ENCODE measurements at regions of chr1 and their contacts with region 1.

Region 1: DNA sequence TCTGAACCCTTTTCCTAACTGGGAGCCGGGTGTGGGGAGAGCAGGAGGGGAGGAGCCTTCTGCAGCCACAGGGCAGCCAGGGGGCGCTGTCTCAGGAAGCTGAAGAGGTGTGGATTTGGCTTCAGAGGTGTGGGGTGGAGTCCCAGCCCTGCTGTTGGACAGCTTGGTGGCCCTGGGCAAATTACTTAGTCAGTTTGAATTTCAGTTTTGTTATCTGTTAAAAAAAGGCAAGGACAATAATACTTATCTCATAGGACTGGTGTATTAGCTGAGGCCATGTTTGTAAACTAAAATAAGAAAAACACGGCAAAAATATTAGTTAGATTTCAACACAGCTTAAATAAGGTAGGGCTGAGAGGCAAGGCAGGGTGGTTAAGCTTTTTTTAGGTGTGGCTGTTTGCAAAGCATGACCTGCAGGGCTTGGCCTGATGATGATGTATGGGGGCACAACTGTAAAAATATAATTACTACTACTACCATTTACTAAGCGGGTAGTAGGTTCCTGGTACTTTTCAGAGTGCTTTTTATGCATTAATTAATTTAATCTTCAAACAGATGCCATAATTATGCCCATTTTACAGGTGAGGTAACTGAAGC is 111.8 kb downstream of the PLXNA2 start:
- DNase-seq: peak; percentile 78
- H3K4me3 Mint-ChIP-seq: no peak overlapping the region
- H3K27ac Mint-ChIP-seq: no peak overlapping the region
- H3K4me1 Mint-ChIP-seq: peaks cover 8% of the 10 kb centered on the region
- H3K27me3 Mint-ChIP-seq: peaks cover 26% of the 10 kb centered on the region

Region 2: GRCh38 chr1:207336559-207337467 is 795.6 kb before region 1 on chr1:
- CTCF ChIA-PET with region 1: no interaction called
- intact Hi-C with region 1: no loop called
- DNase-seq: peak; percentile 43
- H3K4me3 Mint-ChIP-seq: no peak overlapping the region
- H3K27ac Mint-ChIP-seq: peak overlapping the region; percentile 82
- H3K4me1 Mint-ChIP-seq: peaks cover 68% of the 10 kb centered on the region
- H3K27me3 Mint-ChIP-seq: no peaks in the 10 kb centered on the region

Region 3: GRCh38 chr1:207998691-207999090 is 133.7 kb before region 1 on chr1:
- CTCF ChIA-PET with region 1: no interaction called
- intact Hi-C with region 1: no loop called
- DNase-seq: no peak
- H3K4me3 Mint-ChIP-seq: no peak overlapping the region
- H3K27ac Mint-ChIP-seq: no peak overlapping the region
- H3K4me1 Mint-ChIP-seq: no peaks in the 10 kb centered on the region
- H3K27me3 Mint-ChIP-seq: no peaks in the 10 kb centered on the region

Region 4: GRCh38 chr1:208149776-208150514 is 17.6 kb after region 1 on chr1:
- CTCF ChIA-PET with region 1: interaction called, 13 read pairs
- intact Hi-C with region 1: no loop called
- DNase-seq: no peak
- H3K4me3 Mint-ChIP-seq: no peak overlapping the region
- H3K27ac Mint-ChIP-seq: no peak overlapping the region
- H3K4me1 Mint-ChIP-seq: no peaks in the 10 kb centered on the region
- H3K27me3 Mint-ChIP-seq: no peaks in the 10 kb centered on the region

Region 5: DNA sequence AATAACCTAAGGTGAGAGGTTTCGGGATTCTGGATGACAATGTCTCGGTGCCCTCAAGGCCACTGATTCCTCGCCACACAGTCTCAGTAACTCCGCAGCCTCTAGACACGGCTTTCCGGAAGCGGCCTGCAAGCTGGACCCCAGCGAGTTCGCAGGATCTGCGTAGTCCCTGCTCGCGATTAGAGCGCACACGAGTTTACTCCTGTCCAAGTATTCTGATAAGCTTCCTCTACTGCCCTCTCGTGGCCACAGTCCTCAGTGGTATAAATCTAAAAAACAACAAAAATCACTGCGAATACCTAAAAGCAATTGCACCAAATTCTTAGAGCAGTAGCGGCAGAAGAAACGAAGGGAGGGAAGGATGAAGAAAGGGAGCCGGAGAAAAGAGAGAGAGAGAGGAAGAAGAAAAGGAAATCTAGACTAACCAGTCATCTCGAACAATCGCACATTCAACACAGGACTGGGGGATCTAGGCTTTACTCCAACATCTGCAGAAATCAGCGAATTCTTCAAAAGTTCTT is 112.9 kb after region 1 on chr1:
- CTCF ChIA-PET with region 1: interaction called, 39 read pairs
- intact Hi-C with region 1: loop called (anchors 1 kb)
- DNase-seq: peak; percentile 92
- H3K4me3 Mint-ChIP-seq: peak overlapping the region; percentile 70
- H3K27ac Mint-ChIP-seq: no peak overlapping the region
- H3K4me1 Mint-ChIP-seq: peaks cover 10% of the 10 kb centered on the region
- H3K27me3 Mint-ChIP-seq: peaks cover 25% of the 10 kb centered on the region